ENCODE measurements at regions of chr7 and their contacts with region 1.

Region 1: DNA sequence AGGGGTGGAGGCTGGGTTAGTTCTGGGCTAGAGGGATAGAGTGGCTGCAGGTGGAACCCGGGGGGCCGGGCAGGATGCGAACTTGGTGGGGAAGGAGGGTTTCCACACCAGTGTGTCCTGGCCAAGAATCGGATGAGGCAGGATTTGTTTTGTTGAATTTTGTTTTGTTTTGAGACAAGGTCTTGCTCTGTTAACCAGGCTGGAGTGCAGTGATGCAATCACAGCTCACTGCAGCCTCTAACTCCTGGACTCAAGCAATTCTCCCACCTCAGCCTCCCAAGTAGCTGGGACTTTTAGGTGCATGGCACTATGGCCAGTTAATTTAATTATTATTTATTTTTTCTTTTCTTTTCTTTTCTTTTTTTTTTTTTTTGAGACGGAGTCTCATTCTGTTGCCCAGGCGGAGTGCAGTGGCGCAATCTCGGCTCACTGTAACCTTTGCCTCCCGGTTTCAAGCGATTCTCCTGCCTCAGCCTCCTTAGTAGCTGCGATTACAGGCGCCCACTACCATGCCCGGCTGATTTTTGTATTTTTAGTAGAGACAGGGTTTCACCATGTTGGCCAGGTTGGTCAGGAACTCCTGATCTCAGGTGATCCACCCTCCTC is 13.0 kb upstream of the PPP1R35 start:
- DNase-seq: no peak
- ATAC-seq: no peak
- H3K4me3 ChIP-seq: no peak overlapping the region
- H3K27ac ChIP-seq: no peak overlapping the region
- H3K4me1 ChIP-seq: peaks cover 2 to 23% of the 10 kb centered on the region in 2 experiments; a peak in 3 of 4 replicates
- H3K27me3 ChIP-seq: no peaks in the 10 kb centered on the region
- CTCF ChIP-seq: no peak
- POLR2A ChIP-seq: no peak
- RAD21 ChIP-seq: no peak

Region 2: DNA sequence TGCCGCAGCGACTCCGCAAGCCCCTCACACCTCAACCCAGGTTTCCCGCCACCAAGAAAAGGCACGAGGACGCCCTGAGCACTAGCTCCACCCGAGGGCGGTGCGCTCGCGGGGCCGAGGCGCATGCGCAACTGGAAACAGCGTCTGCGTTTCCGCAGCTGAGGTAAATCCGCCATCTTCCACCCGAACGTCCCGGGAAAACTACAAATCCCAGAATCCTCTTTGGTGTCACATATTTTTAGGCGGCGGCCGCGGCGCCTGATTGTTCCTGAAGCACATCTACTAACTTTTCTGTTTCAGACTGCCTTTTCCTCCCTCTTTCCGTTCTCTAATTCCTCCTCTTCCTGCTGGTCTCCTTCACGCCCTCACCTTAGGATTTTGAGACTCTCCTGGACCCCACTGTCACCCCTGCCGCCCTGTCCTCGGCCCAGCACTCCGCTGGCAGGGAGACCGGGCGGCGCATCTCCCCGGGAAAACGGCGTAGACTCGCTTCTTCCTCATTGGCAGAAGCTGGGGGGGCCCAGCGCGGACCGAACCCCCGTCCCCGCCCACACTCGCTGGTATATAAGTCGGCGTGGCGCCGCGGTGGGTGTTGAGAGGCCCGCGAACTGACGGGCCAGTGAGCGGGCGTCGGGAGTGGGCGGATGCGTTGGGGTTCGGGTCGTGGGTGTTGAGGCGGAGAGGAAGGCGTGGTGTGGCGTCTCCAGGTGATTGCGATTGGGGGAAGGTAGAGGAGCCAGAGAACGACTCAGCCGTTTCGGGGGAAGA is 20.9 kb before region 1 on chr7 and contains the start of gene ZCWPW1:
- CTCF ChIA-PET with region 1: interaction called, 12 read pairs
- POLR2A ChIA-PET with region 1: interaction called, 8 read pairs
- RAD21 ChIA-PET with region 1: no interaction called
- intact Hi-C with region 1: no loop called
- DNase-seq: peak; percentile 97
- ATAC-seq: peak; percentile 65
- H3K4me3 ChIP-seq: peak within 1 kb of the TSS; percentile 82 to 85
- H3K27ac ChIP-seq: peak within 1 kb of the TSS; percentile 99
- H3K4me1 ChIP-seq: peaks cover 0 to 45% of the 10 kb centered on the region in 2 experiments
- H3K27me3 ChIP-seq: no peaks in the 10 kb centered on the region
- CTCF ChIP-seq: no peak
- POLR2A ChIP-seq: peak; percentile 99
- RAD21 ChIP-seq: no peak
- total RNA-seq, gene ZCWPW1: 1.5 TPM

Region 3: DNA sequence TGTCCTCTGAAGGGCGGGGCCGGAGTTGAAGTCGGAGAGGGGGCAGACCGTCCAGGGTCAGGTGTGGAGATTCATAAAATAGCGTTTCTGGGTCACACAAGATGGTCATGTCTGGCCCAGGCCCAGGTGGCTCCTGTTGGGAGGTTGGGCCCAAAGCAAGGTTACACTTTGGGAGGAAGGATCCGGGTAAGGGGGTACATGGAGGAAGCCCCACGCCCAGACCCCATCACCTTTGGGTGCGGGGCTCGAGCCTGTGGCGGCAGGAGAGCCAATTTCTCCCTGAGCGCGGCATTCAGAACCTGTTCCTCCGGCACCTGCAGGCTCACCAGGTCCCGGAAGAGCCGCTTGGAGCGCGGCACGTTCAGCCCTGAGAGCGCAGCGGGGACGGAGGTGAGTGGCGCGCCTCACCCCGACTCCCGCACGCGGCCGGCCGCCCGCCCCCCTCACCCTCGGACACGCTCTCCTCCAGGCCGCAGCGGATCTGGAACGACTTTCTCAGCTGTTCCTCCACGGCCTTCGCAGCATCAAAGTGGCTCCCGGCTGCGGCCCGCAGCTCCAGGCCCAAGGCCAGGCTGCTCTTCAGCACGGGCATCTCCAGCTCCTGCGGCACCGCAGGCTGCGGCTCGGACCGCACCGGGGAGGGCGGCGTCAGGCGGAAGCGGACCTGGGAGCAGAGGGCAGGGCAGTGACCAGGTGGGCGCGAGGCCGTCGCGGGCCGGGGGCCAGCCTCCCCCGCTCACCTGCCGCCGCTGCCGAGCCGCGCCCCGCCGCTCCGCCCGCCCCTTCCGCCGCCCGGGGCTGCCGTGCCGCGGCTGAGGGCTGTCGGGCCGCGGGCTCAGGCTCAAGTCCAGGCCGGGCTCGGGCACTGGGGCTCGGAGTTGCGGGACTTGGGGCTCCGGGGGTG is 13.6 kb before region 1 on chr7:
- CTCF ChIA-PET with region 1: interaction called, 10 read pairs
- POLR2A ChIA-PET with region 1: interaction called, 3 read pairs
- RAD21 ChIA-PET with region 1: no interaction called
- intact Hi-C with region 1: no loop called
- DNase-seq: no peak
- ATAC-seq: peak; percentile 49
- H3K4me3 ChIP-seq: peak overlapping the region; percentile 85 to 97
- H3K27ac ChIP-seq: peak overlapping the region; percentile 99
- H3K4me1 ChIP-seq: peaks cover 2 to 52% of the 10 kb centered on the region in 2 experiments
- H3K27me3 ChIP-seq: no peaks in the 10 kb centered on the region
- CTCF ChIP-seq: no peak
- POLR2A ChIP-seq: no peak
- RAD21 ChIP-seq: no peak

Measured in HCT116 (cell line).